ENCODE measurements at regions of chr14 and their contacts with region 1.

Region 1: DNA sequence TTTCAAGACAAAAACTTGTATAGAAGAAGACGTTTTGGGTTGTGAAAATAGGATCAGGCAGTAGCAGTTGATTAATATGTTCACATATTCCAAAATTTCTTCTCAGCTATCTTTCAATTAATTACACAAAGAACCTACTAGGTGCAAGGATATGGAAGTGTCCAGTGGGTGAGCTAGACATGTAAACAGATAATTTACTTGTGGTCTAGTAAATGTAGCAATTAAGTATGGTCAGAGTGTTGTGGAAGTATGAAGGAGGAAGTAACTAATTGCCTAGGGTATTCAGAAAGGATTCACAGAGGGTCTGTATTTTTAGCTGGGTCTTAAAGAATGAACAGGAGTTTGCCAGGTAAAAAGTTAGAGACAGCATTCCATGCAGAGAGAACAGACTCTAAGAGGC is 5.9 kb downstream of the GOLGA5 start:
- DNase-seq: no peak
- ATAC-seq: peak; percentile 60
- H3K4me3 ChIP-seq: no peak overlapping the region
- H3K27ac ChIP-seq: no peak overlapping the region
- H3K4me1 ChIP-seq: peaks cover 3% of the 10 kb centered on the region; the same call in 1 of the 2 replicates
- H3K27me3 ChIP-seq: no peaks in the 10 kb centered on the region
- CTCF ChIP-seq: no peak
- EP300 ChIP-seq: no peak
- POLR2A ChIP-seq: no peak
- RAD21 ChIP-seq: no peak

Region 2: DNA sequence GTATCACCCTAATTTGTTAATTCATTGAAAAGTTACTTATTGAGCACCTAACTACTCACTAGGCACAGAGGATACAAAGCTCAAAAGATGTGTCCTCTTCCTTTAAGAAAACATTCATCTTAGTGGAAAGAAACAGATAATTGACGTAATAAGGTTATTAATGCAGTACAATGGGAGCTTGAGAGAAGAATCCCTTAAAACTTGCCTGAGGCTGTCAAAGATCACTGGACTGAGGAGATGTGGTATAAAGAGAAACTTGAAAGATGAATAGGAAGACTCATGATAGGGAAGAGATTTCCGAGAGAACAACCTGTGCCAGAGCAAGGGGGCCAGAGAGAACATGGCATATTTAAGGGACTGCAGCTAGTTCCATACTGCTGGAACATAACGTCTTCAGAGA is 13.2 kb after region 1 on chr14:
- CTCF ChIA-PET with region 1: interaction called, 4 read pairs
- POLR2A ChIA-PET with region 1: interaction called, 7 read pairs
- RAD21 ChIA-PET with region 1: no interaction called
- SMC1A ChIA-PET with region 1: interaction called, 10 read pairs
- in situ Hi-C with region 1: no loop called
- intact Hi-C with region 1: no loop called
- DNase-seq: no peak
- ATAC-seq: no peak
- H3K4me3 ChIP-seq: no peak overlapping the region
- H3K27ac ChIP-seq: no peak overlapping the region
- H3K4me1 ChIP-seq: no peaks in the 10 kb centered on the region
- H3K27me3 ChIP-seq: no peaks in the 10 kb centered on the region
- CTCF ChIP-seq: no peak
- EP300 ChIP-seq: no peak
- POLR2A ChIP-seq: no peak
- RAD21 ChIP-seq: no peak

Region 3: GRCh38 chr14:92819011-92819597 is 19.1 kb after region 1 on chr14:
- CTCF ChIA-PET with region 1: no interaction called
- POLR2A ChIA-PET with region 1: no interaction called
- RAD21 ChIA-PET with region 1: no interaction called
- SMC1A ChIA-PET with region 1: interaction called, 10 read pairs
- in situ Hi-C with region 1: no loop called
- intact Hi-C with region 1: no loop called
- DNase-seq: no peak
- ATAC-seq: no peak
- H3K4me3 ChIP-seq: no peak overlapping the region
- H3K27ac ChIP-seq: no peak overlapping the region
- H3K4me1 ChIP-seq: no peaks in the 10 kb centered on the region
- H3K27me3 ChIP-seq: no peaks in the 10 kb centered on the region
- CTCF ChIP-seq: no peak
- EP300 ChIP-seq: no peak
- POLR2A ChIP-seq: no peak
- RAD21 ChIP-seq: no peak